A549 (cell line): ENCODE measurements at regions of chr15 and their contacts with region 1.

Region 1: DNA sequence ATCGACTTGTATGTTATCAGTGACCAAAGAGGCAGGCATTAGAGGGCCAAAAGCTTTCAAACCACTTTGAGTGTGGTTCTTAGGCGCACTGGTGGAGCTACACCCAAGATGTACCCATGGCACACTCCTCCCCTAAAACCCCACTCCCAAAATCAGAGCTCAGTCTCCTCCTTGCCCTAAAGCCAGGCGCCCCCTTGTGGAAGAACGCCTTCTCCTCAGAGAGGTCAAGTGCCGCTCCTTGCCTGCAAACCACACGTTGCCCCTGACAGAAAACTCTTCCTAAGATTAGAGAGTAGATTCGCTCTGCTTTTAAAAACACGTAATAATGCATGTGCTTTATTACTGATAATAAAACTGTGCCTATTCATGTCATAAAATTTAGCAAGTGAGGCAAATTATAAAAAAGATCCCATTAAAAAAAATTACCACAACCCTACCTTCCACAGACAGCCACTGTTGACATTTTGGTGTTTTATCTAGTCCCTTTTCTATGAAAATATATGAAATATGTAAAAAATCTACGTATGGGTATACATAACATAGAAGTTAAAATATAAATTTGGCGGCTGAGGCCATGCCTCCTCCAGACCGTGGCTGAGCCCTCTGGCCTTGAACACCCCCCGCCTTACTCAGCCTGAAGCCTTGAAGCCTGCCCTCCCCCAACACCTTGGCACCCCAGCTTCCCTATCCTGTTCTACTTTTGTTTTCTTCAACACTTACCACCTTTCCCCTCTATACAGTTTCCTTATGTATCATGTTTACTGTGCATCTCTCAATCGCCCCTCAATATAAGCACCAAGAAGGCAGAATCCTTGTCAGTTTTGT is 33.5 kb downstream of the BCL2L10 start:
- DNase-seq: peak; percentile 79 to 82
- ATAC-seq: peak; percentile 55 to 87; a peak in 4 of 6 replicates
- H3K4me3 ChIP-seq: no peak overlapping the region
- H3K27ac ChIP-seq: peak overlapping the region; percentile 69 to 82
- H3K4me1 ChIP-seq: peaks cover 34% of the 10 kb centered on the region
- CTCF ChIP-seq: peak; percentile 93
- EP300 ChIP-seq: no peak
- POLR2A ChIP-seq: no peak
- RAD21 ChIP-seq: peak; percentile 81 to 88

Region 2: GRCh38 chr15:51982013-51982769 is 96.9 kb before region 1 on chr15:
- CTCF ChIA-PET with region 1: interaction called, 33 read pairs
- POLR2A ChIA-PET with region 1: no interaction called
- DNase-seq: peak; percentile 83 to 89
- ATAC-seq: peak; percentile 94 to 96
- H3K4me3 ChIP-seq: peak overlapping the region; percentile 25; the same call in 2 of the 3 replicates
- H3K27ac ChIP-seq: peak overlapping the region; percentile 81 to 87
- H3K4me1 ChIP-seq: peaks cover 22% of the 10 kb centered on the region
- CTCF ChIP-seq: peak; percentile 97
- EP300 ChIP-seq: no peak
- POLR2A ChIP-seq: no peak
- RAD21 ChIP-seq: peak; percentile 96 to 98

Region 3: GRCh38 chr15:52037889-52038505 is 41.1 kb before region 1 on chr15:
- CTCF ChIA-PET with region 1: interaction called, 19 read pairs
- POLR2A ChIA-PET with region 1: no interaction called
- DNase-seq: no peak
- ATAC-seq: no peak
- H3K4me3 ChIP-seq: no peak overlapping the region
- H3K27ac ChIP-seq: no peak overlapping the region
- H3K4me1 ChIP-seq: peaks cover 59% of the 10 kb centered on the region
- CTCF ChIP-seq: no peak
- EP300 ChIP-seq: no peak
- POLR2A ChIP-seq: no peak
- RAD21 ChIP-seq: no peak

Region 4: DNA sequence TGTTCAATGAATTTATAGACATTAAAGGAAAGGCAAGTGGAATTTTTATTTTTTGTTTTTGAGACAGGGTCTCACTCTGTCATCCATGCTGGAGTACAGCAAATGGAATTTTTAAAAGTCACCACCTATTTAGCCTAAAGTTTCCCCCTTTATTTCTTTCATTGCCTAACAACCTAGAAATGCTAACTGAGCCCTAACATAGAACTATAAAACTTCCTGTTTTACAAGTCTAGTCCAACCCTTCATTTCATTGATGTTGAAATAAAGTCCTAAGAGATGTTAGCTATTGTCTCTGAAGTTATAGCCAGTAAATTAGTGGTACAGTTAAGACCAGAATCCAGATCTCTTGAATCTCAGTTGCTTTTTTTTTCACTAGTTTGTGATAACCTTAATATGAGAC is 21.1 kb before region 1 on chr15:
- CTCF ChIA-PET with region 1: interaction called, 14 read pairs
- POLR2A ChIA-PET with region 1: no interaction called
- DNase-seq: no peak
- ATAC-seq: no peak
- H3K4me3 ChIP-seq: no peak overlapping the region
- H3K27ac ChIP-seq: no peak overlapping the region
- H3K4me1 ChIP-seq: peaks cover 20% of the 10 kb centered on the region
- CTCF ChIP-seq: no peak
- EP300 ChIP-seq: no peak
- POLR2A ChIP-seq: no peak
- RAD21 ChIP-seq: no peak

Region 5: DNA sequence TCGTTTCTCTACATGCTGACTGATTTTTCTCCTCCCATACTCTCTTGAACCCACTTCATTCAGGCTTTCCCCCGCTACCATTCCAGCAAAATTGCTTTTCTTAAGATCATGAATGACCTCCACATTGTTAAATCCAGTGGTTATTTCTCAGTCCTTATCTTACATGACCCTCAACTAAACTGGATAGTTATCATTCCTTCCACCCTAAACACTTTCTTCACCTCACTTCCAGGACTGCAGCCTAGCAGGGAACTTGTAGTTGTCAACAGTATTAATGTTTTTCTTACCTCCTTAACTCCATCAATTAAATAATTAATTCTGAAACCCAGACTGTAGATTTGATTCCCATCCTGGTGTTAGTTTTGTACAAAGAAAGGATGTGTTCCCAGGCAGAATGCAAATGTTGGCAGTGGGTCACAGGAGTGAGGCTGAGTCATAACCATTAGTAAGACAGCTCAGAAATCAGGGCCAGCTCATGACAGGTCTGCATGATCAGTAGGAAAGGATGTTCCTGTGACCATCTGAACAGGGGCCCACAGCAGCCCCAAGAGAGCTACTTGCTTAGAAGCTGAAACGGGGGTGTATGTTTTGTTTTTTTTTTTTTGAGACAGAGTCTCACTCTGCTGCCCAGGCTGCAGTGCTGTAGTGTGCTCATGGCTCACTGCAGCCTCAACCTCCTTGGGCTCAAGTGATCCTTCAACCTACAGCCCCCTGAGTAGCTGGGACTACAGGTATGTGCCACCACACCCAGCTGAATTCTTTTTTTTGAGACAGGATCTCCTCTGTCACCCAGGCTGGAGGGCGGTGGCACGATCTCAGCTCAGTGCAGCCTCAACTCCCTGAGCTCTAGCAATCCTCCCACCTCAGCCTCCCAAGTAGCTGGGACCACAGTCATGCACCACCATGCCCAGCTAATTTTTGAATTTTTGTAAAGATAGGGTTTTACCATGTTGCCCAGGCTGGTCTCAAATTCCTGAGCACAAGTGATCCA is 24.4 kb after region 1 on chr15:
- CTCF ChIA-PET with region 1: interaction called, 12 read pairs
- POLR2A ChIA-PET with region 1: interaction called, 3 read pairs
- DNase-seq: peak; percentile 79 to 84
- ATAC-seq: peak; percentile 92 to 97
- H3K4me3 ChIP-seq: no peak overlapping the region
- H3K27ac ChIP-seq: peak overlapping the region in 1 of 2 experiments; percentile 57
- H3K4me1 ChIP-seq: peaks cover 27% of the 10 kb centered on the region
- CTCF ChIP-seq: no peak
- EP300 ChIP-seq: no peak
- POLR2A ChIP-seq: no peak
- RAD21 ChIP-seq: no peak